Activated naive CD4-positive, alpha-beta T cell treated with anti-CD3 and anti-CD28 coated beads, Interleukin-2, amount 10 ng/mL, durations not matched to agents 7 days and 5 days (primary cell): ENCODE measurements at regions of chr1 and their contacts with region 1.

Region 1: DNA sequence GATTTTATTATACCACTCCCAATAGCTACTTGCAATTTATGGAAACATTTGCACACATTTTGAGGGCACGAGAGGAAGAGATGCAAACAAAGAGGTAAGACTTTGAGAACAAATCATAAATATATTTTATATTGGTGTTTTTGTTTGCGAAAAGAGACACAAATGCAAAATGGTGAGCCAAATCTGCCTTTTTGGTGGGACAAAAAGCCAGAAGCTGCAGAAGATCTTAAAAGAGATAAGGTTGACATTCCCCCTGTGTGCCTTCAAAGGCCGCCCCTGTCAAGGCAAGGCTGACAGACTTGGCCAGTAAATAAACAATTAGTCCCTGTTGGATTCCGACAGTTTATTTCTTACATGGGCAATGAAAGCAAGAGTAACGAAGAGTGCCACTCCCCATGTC is 122.8 kb downstream of the LBR start:
- DNase-seq: no peak
- H3K4me3 Mint-ChIP-seq: no peak overlapping the region
- H3K27ac Mint-ChIP-seq: no peak overlapping the region
- H3K4me1 Mint-ChIP-seq: no peaks in the 10 kb centered on the region
- H3K27me3 Mint-ChIP-seq: peaks cover 3% of the 10 kb centered on the region

Region 2: GRCh38 chr1:225137981-225138380 is 167.0 kb before region 1 on chr1:
- CTCF ChIA-PET with region 1: no interaction called
- DNase-seq: no peak
- H3K4me3 Mint-ChIP-seq: no peak overlapping the region
- H3K27ac Mint-ChIP-seq: no peak overlapping the region
- H3K4me1 Mint-ChIP-seq: no peaks in the 10 kb centered on the region
- H3K27me3 Mint-ChIP-seq: no peaks in the 10 kb centered on the region

Region 3: DNA sequence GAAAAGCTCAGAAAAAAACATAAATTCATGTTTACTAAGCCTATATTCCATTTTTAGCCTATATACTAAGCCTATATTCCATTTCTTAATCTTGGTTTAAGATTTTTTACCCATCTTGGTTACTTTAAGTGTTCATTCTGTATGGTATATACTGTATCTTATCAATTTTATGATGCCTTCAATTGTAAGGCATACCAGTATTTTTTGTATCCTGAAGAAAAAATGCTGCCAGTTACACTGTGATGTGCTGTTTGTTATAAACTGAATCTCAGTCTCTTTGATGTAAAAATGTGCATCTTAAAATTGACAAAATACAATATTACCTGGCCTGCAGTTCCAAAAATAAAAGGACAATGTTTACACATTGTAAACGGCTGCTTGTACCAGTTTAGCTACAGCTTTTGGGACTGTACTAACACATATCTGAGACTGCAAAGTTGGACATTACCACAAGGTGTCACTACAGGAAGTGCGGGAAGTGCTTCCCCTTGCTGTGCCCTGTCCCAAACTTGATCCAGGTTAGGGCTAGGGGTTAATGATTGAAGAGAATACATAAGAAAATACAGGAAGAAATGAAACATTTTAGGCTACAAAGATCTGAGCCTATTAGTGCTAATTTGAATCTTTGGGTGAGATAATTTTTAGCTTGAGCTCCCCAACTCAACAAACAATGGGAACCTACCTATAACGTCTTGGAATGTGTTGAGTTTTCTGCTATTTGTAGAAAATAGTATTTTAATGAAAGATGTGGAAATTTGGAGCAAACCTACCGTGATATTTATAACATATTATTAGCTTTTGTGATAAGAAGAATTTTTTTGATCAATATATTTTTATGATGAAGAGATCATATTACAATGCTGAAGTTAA is 13.9 kb after region 1 on chr1:
- CTCF ChIA-PET with region 1: interaction called, 12 read pairs
- DNase-seq: peak; percentile 31
- H3K4me3 Mint-ChIP-seq: no peak overlapping the region
- H3K27ac Mint-ChIP-seq: no peak overlapping the region
- H3K4me1 Mint-ChIP-seq: no peaks in the 10 kb centered on the region
- H3K27me3 Mint-ChIP-seq: peaks cover 3% of the 10 kb centered on the region